ENCODE measurements at regions of chr5 and their contacts with region 1.

Region 1: GRCh38 chr5:173764321-173765029 is 123.7 kb upstream of the CPEB4 start:
- DNase-seq: peak; percentile 86 to 90 (median 88)
- ATAC-seq: peak; percentile 73 to 90
- H3K4me3 ChIP-seq: no peak overlapping the region
- H3K27ac ChIP-seq: peak overlapping the region; percentile 89
- H3K4me1 ChIP-seq: peaks cover 9% of the 10 kb centered on the region
- H3K27me3 ChIP-seq: no peaks in the 10 kb centered on the region

Region 2: DNA sequence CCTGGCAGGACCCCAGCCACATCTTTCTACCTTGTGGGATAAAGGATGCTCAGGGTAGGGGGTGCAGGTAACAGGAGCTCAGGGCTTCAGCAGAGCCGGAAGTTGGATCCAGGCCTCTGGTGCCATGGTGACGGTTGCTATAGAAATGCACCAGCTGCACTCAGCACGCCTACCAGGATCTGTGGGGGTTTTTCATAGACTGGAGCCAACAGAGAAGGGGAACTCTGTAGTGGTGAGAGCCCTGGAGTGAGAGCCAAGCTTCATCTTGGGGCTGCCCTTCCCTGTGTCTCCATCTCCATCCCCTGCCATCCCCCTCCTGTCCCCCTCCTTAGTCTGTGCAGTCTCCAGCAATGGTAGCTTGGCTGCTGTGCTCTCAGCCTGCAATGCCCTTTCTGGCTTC is 120.5 kb before region 1 on chr5:
- intact Hi-C with region 1: loop called in 1 of 4 experiments (anchors 10 kb)
- DNase-seq: no peak
- ATAC-seq: no peak
- H3K4me3 ChIP-seq: no peak overlapping the region
- H3K27ac ChIP-seq: no peak overlapping the region
- H3K4me1 ChIP-seq: peaks cover 2% of the 10 kb centered on the region
- H3K27me3 ChIP-seq: no peaks in the 10 kb centered on the region

Region 3: DNA sequence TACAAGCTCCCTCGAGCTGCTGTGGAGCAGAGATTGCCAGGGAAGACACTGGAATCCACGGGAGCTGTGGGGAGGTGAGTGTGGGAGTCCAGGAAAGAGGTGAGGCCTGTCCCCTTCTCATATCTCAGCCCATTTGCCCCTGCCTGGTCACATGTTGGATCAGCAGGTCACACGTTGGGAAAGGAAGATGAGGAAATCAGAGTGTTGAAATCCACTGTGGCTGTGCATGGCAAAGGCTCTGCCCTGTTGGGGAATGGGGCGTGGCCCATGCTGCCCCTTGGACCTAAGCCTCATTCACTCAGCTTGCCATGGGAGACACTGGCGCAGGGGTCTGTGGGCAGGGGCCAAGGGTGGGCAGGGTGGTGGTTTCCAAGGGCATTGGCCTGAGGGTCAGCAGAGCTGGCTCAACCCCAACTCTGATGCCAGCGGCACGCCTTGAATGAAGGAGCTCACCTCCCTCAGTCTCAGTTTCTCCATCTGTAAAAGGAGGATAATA is 38.2 kb after region 1 on chr5:
- intact Hi-C with region 1: no loop called
- DNase-seq: peak; percentile 50 to 76 (median 73)
- ATAC-seq: peak; percentile 34 to 60
- H3K4me3 ChIP-seq: no peak overlapping the region
- H3K27ac ChIP-seq: no peak overlapping the region
- H3K4me1 ChIP-seq: no peaks in the 10 kb centered on the region
- H3K27me3 ChIP-seq: no peaks in the 10 kb centered on the region

Region 4: DNA sequence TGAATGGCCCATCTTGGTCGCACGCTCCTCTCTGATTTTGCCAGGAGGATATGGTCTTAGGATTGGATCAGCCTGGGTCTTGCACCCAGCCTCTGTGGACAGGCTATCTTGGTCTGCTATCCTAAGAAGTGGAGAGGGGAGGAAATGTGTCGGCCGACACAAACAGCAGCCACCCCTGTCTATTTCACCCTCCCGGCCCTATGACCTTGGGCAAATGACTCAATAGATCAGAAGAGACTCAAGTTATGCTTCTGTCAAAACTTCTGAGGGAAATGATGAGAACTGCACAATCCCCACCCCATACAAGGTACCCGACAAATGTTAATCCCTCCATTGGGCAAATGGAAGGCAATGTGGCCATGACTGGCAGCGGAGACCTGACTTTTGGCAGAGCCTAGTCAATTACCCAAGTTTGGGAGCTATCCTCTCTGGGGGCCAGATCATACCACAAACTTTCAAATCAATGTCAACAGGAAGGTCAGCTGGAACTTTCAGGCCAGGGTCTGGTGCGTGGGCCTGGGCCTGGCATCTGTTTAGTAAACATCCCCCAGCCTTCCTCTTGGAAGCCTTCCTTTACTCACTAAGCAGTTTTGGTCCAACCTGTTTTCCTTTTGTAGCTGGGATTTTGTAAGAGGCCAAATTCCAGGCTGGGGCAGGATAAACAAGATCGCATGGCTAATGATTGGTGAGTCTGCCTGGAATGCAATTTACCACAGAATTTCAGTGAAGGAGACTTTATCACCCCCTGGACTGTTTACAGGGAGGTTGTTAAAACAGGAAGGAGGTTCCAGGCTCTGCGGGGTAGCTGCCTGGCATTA is 59.4 kb after region 1 on chr5:
- intact Hi-C with region 1: no loop called
- DNase-seq: no peak
- ATAC-seq: peak; percentile 37 to 39
- H3K4me3 ChIP-seq: no peak overlapping the region
- H3K27ac ChIP-seq: no peak overlapping the region
- H3K4me1 ChIP-seq: no peaks in the 10 kb centered on the region
- H3K27me3 ChIP-seq: no peaks in the 10 kb centered on the region

Region 5: DNA sequence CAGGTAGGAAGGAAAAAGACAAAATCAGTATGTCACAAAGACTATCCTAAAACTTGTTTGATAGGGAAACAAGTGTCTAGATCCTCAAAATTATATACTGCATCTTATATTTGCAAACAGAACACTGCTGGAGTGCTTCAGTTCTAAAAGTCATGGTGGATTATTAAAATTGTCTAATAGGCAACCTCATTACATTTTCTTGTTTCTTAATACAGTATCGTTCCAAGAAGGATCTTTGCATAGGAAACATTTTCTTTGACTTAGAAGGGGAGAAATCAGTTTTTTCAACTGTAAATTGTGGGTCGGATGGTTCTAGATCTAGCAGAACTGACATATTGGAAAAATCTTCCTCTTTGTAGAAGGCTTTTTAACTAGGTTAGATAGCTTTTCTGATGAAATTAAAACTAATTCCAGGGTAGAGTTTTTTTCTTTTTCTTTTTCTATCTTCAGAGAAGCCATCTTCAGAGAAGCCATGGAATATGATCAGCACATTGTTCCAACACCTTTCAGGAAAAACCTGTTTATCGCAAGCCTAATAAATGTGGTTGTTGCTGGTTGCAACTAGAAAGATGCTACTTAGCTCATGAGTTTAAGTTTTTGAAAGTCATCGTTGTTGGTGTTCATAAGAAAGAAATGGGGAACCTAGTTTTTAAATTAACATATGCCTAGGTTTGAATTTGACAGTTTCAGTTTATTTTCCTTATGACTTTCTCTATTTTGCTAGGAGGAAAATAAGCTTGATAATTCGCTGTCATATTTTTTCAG is 131.1 kb after region 1 on chr5:
- intact Hi-C with region 1: no loop called
- DNase-seq: no peak
- ATAC-seq: no peak
- H3K4me3 ChIP-seq: peak overlapping the region; percentile 41
- H3K27ac ChIP-seq: no peak overlapping the region
- H3K4me1 ChIP-seq: no peaks in the 10 kb centered on the region
- H3K27me3 ChIP-seq: no peaks in the 10 kb centered on the region

Region 6: GRCh38 chr5:173963867-173964441 is 199.5 kb after region 1 on chr5:
- intact Hi-C with region 1: loop called in 1 of 4 experiments (anchors 5 kb)
- DNase-seq: no peak
- ATAC-seq: peak; percentile 9 to 29
- H3K4me3 ChIP-seq: no peak overlapping the region
- H3K27ac ChIP-seq: peak overlapping the region; percentile 48
- H3K4me1 ChIP-seq: no peaks in the 10 kb centered on the region
- H3K27me3 ChIP-seq: no peaks in the 10 kb centered on the region

Region 7: DNA sequence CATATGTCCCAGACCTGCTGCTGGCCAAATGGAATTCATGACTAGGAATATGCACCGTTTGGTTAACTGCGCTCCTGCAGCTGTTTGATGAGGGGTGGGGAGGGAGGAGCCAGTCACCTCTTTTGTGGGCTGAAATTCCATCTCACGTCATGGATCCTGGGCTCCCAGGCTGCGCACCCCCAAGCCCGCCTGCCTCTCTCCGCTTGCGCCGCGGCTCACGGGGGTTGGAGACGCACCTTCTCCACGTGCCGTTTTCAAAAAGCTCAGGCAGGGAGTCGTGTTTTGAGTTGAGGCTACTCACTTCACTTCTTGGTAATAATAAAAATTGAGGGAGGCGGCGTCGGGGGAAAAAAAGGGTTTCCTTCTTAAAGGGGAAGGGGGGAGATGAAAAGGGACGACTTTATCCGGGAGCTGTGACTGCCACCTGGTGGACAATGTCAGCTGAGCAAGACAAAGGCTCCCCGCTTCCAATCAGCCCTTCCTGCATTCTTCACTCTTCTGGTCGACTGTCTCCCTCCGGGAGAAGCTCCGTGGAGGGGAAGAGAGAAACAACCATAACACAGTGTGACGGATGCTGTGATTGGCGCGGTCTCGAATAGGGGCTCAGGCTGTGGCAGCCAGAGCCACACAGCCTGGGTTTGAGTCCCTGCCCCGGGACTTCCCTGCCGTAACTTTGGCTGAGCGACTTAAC is 208.6 kb after region 1 on chr5:
- intact Hi-C with region 1: loop called in 1 of 4 experiments (anchors 5 kb)
- DNase-seq: peak; percentile 83 to 91 (median 87)
- ATAC-seq: peak; percentile 83 to 85
- H3K4me3 ChIP-seq: peak overlapping the region; percentile 23
- H3K27ac ChIP-seq: peak overlapping the region; percentile 38
- H3K4me1 ChIP-seq: peaks cover 6% of the 10 kb centered on the region
- H3K27me3 ChIP-seq: no peaks in the 10 kb centered on the region

Region 8: DNA sequence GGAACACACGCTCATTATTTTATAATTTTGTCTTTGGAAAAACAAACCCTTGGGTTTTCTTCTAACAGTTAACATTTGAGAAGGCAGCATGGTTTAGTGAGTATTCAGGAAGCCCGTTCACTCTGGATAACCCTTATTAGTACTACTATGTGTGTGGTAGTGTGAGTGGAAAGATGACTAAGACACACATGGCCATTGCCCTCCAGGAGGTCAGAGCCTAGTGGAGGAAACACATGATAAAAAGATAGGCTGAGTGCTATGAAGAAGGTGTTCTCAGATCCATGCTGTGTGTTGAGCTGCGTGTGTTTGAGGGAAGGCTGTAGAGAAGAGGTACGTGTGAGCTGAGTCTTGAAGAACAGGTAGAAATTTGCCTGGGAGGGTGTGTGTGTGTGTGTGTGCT is 232.9 kb after region 1 on chr5:
- intact Hi-C with region 1: no loop called
- DNase-seq: peak in 1 of 3 donors; percentile 18
- ATAC-seq: no peak
- H3K4me3 ChIP-seq: no peak overlapping the region
- H3K27ac ChIP-seq: no peak overlapping the region
- H3K4me1 ChIP-seq: no peaks in the 10 kb centered on the region
- H3K27me3 ChIP-seq: no peaks in the 10 kb centered on the region

Measured in right cardiac atrium (tissue), 5 donors.